ENCODE measurements at regions of chr5 and their contacts with region 1.

Region 1: DNA sequence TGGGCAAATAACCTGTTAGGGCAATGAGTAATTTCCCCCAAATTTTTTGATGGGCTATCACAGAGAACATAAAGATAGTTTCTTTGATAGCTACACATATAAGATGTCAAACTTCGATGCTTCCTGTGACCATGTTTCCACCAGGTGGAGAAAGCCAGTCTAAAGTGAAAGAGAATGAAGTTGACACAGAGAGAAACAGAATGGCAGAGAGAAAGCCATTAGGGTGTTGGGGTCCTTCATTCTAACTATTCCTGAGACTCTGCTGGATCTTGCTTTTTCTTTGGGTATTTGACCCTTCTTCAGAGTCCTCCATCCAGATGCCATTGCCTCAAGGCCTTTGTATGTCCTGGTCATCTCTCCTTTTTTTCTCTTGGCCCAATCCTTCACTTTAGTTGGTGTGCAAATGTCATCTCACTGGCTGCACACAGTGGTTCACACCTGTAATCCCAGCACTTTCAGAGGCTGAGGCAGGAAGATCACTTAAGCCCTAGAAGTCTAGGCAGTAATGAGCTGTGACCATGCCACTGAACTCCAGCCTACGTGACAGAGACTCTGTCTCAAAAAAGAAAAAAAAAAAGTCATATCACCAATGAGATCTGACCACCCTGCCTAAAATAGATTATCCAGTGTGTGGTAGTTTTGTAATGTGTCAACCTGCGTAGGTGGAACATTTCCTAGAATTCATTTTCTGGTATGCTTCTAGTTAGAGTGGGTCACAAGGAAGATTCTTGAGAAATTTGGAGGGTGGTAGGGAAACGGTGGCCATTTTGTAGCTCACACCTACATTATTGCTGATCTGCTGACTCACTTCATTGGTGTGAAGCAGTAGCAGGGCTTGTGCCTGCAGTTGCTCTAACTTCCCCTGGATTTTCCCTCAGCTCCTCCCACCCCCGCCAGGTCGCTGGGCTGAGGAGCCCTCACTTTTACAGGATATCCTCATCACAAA is 20.8 kb upstream of the KIF2A start:
- DNase-seq: peak; percentile 69
- H3K4me3 Mint-ChIP-seq: peak overlapping the region; percentile 51
- H3K27ac Mint-ChIP-seq: peak overlapping the region; percentile 95
- H3K4me1 Mint-ChIP-seq: peaks cover 83% of the 10 kb centered on the region
- H3K27me3 Mint-ChIP-seq: peaks cover 1% of the 10 kb centered on the region

Region 2: GRCh38 chr5:61162010-61162831 is 1123.0 kb before region 1 on chr5 and contains the start of gene SMIM15:
- intact Hi-C with region 1: loop called (anchors 10 kb)
- DNase-seq: peak; percentile 81
- H3K4me3 Mint-ChIP-seq: peak within 1 kb of the TSS; percentile 95
- H3K27ac Mint-ChIP-seq: peak within 1 kb of the TSS; percentile 92
- H3K4me1 Mint-ChIP-seq: peaks cover 40% of the 10 kb centered on the region
- H3K27me3 Mint-ChIP-seq: no peaks in the 10 kb centered on the region
- total RNA-seq, gene SMIM15: 84.0 and 86.7 TPM in 2 replicates

Region 3: GRCh38 chr5:61534481-61535267 is 750.5 kb before region 1 on chr5:
- intact Hi-C with region 1: loop called (anchors 1 kb)
- DNase-seq: no peak
- H3K4me3 Mint-ChIP-seq: peak overlapping the region; percentile 25
- H3K27ac Mint-ChIP-seq: peak overlapping the region; percentile 69
- H3K4me1 Mint-ChIP-seq: peaks cover 16% of the 10 kb centered on the region
- H3K27me3 Mint-ChIP-seq: no peaks in the 10 kb centered on the region

Region 4: DNA sequence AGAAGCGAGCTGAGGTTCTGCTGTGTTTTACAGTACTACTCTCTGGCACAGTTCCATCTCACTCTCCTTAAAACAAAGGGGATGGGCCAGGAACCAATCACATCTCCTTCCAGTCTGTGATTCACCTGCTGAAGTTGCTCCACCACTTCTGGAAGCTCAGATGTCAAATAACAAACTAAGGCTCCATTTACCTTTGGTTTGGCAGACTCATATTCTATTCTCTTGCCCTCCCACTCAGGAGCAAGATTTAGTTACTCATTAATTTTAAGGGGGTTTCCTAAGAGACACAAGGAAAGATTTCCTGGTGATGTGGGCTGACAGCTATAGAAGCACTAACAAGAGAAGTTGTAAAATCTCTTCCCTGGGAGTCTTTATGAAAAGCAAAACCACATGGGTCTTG is 17.0 kb before region 1 on chr5:
- intact Hi-C with region 1: loop called (anchors 1 kb)
- DNase-seq: no peak
- H3K4me3 Mint-ChIP-seq: no peak overlapping the region
- H3K27ac Mint-ChIP-seq: peak overlapping the region; percentile 46
- H3K4me1 Mint-ChIP-seq: peaks cover 59% of the 10 kb centered on the region
- H3K27me3 Mint-ChIP-seq: no peaks in the 10 kb centered on the region

Region 5: GRCh38 chr5:62340392-62340791 is 55.2 kb after region 1 on chr5:
- intact Hi-C with region 1: loop called (anchors 2 kb)
- DNase-seq: no peak
- H3K4me3 Mint-ChIP-seq: no peak overlapping the region
- H3K27ac Mint-ChIP-seq: no peak overlapping the region
- H3K4me1 Mint-ChIP-seq: peaks cover 69% of the 10 kb centered on the region
- H3K27me3 Mint-ChIP-seq: no peaks in the 10 kb centered on the region

Region 6: DNA sequence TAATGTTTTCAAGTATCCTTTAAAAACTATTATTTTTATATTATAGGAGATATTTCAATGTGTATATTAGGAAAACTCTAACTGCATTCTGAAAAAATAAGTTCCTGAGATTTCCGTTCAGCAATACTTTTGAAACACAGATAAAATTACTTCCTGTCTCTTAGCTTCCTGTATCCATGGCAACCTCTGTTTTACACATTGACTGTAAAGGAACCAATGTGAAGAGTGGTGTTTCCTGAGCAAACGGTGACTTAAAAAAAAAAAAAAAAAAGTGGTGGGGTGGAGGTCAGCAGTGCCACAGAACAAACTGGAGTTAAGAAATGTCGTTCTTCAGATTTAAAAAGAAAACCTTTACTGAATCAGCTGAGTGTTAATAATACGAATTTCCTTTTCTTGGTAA is 293.3 kb after region 1 on chr5 and contains the start of gene LRRC70:
- intact Hi-C with region 1: loop called (anchors 5 kb)
- DNase-seq: peak; percentile 21
- H3K4me3 Mint-ChIP-seq: peak within 1 kb of the TSS; percentile 29
- H3K27ac Mint-ChIP-seq: peak within 1 kb of the TSS; percentile 59
- H3K4me1 Mint-ChIP-seq: peaks cover 31% of the 10 kb centered on the region
- H3K27me3 Mint-ChIP-seq: no peaks in the 10 kb centered on the region
- total RNA-seq, gene LRRC70: 0.83 and 0.86 TPM in 2 replicates

Measured in activated T-helper 1 cell treated with anti-CD3 and anti-CD28 coated beads, Interleukin-12 subunit alpha, Interleukin-12 subunit beta, Interleukin-2, Interleukin-4 antibody, amounts not matched to agents 30 ng/mL and 10 ng/mL and 1 ng/mL, durations not matched to agents 14 hours and 24 hours and 36 hours (primary cell).